Heart right ventricle (tissue), 16 donors: ENCODE measurements at regions of chr3 and their contacts with region 1.

Region 1: GRCh38 chr3:46089237-46090011 is 62.1 kb upstream of the XCR1 start:
- DNase-seq: peak; percentile 24 to 51
- ATAC-seq: peak; percentile 79 to 89 (median 86)
- H3K4me3 ChIP-seq: no peak overlapping the region
- H3K27ac ChIP-seq: peak overlapping the region in 4 of 10 donors; percentile 23 to 90 (median 58)
- H3K4me1 ChIP-seq: peaks cover 0 to 76% (median 0%) of the 10 kb centered on the region in 9 donors
- H3K27me3 ChIP-seq: no peaks in the 10 kb centered on the region
- CTCF ChIP-seq: no peak

Region 2: DNA sequence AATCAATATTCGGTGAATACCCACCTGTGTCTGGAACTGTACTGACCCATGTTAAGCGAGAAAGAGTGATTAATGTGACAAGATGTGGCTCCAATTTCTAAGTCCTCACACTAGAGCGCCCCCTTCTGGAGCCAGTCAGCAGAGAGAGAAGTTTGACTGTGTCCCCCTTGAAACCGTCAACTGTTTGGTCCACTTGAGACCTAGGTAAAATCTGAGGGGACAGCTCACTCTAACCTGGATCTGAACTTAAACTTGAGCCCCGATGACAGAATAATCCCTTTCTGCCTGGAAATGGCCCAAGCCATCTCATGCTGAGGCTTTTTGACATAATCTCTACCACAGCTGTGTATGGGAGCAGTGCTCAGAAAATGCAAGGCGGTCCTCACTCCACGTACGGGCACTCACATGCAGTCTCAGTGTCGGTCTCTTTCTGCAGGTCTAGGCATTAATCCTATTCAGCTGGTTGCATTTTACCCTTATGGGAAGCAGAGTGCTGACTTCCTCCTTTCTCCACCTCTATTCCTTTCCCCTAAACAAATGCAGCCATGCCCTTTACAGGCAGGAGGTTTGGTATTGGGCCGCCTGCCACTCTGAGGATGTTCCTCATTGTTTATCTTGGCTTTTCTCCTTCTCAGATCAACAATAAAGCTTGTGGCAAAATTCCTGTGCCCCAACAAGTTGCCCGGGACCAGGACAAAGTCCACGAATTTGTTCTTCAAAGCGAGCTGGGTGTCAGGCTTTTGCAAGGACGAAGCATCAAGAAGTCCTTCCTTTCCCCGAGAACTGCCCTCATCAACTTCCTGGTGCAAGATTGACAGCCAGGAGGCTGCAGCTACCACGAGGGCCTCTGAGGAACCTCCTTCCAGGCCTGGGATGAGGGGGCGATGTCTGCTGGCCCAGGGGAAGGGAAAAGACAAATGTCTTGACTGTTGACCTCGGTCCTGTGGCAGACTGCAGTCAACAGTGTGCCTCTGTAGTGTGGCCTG is 542.4 kb before region 1 on chr3:
- intact Hi-C with region 1: no loop called
- DNase-seq: no peak
- ATAC-seq: no peak
- H3K4me3 ChIP-seq: no peak overlapping the region
- H3K27ac ChIP-seq: peak overlapping the region in 8 of 10 donors; percentile 17 to 84 (median 56)
- H3K4me1 ChIP-seq: peaks cover 14 to 84% (median 68%) of the 10 kb centered on the region in 9 donors
- H3K27me3 ChIP-seq: no peaks in the 10 kb centered on the region
- CTCF ChIP-seq: peak in 7 of 9 donors; percentile 14 to 38 (median 30)

Region 3: GRCh38 chr3:45986303-45986982 is 103.0 kb before region 1 on chr3:
- intact Hi-C with region 1: no loop called
- DNase-seq: peak; percentile 43 to 71
- ATAC-seq: peak; percentile 68 to 87 (median 84)
- H3K4me3 ChIP-seq: no peak overlapping the region
- H3K27ac ChIP-seq: peak overlapping the region; percentile 79 to 99 (median 92)
- H3K4me1 ChIP-seq: peaks cover 39 to 99% (median 90%) of the 10 kb centered on the region in 9 donors
- H3K27me3 ChIP-seq: no peaks in the 10 kb centered on the region
- CTCF ChIP-seq: no peak

Region 4: DNA sequence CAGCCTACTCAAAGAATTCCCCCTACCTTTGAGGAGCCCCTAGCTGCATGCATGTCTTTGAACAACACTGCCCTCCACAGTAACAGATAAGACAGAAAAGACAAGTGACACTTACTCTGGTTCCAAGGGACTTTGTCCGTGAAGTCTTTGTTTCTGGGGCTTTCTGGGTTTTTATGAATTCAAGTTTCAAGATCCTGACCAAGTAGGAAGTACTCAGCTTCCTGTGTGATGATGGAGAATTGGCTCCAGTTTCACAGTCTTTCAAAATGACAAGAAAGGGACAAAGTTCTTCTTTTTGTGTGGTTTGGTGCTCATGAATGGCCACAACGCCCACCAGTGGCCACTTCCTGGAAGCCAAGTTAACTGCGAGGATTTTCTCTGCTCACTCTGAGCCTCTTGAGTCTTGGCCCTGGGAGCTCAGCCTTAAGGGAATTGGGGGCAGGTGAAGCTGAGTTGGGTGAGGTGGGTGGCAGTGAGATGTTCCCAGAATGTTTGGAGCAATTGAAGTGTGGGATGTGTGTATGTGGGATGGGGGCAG is 118.8 kb after region 1 on chr3 and contains the start of gene CCR1:
- intact Hi-C with region 1: loop called in 1 of 10 experiments (anchors 10 kb)
- DNase-seq: peak in 1 of 2 donors; percentile 36
- ATAC-seq: peak in 7 of 8 donors; percentile 29 to 77 (median 43)
- H3K4me3 ChIP-seq: peak within 1 kb of the TSS in 7 of 10 donors; percentile 18 to 60 (median 30)
- H3K27ac ChIP-seq: peak within 1 kb of the TSS in 5 of 10 donors; percentile 30 to 90 (median 46)
- H3K4me1 ChIP-seq: peaks cover 0 to 52% (median 0%) of the 10 kb centered on the region in 9 donors
- H3K27me3 ChIP-seq: peaks cover 0 to 6% (median 0%) of the 10 kb centered on the region in 7 donors
- CTCF ChIP-seq: peak in 5 of 9 donors; percentile 6 to 54 (median 34)
- total RNA-seq, gene CCR1: 0.66 to 24.9 (median 1.8) TPM

Region 5: GRCh38 chr3:46368569-46368968 is 279.1 kb after region 1 on chr3:
- intact Hi-C with region 1: loop called in 7 of 10 experiments (anchors 5 to 10 kb)
- DNase-seq: peak; percentile 44 to 46
- ATAC-seq: peak in 7 of 8 donors; percentile 64 to 85 (median 74)
- H3K4me3 ChIP-seq: no peak overlapping the region
- H3K27ac ChIP-seq: peak overlapping the region in 1 of 10 donors; percentile 86
- H3K4me1 ChIP-seq: peaks cover 0 to 50% (median 0%) of the 10 kb centered on the region in 9 donors
- H3K27me3 ChIP-seq: peaks cover 0 to 45% (median 7%) of the 10 kb centered on the region in 7 donors
- CTCF ChIP-seq: peak in 4 of 9 donors; percentile 21 to 64 (median 25)

Region 6: DNA sequence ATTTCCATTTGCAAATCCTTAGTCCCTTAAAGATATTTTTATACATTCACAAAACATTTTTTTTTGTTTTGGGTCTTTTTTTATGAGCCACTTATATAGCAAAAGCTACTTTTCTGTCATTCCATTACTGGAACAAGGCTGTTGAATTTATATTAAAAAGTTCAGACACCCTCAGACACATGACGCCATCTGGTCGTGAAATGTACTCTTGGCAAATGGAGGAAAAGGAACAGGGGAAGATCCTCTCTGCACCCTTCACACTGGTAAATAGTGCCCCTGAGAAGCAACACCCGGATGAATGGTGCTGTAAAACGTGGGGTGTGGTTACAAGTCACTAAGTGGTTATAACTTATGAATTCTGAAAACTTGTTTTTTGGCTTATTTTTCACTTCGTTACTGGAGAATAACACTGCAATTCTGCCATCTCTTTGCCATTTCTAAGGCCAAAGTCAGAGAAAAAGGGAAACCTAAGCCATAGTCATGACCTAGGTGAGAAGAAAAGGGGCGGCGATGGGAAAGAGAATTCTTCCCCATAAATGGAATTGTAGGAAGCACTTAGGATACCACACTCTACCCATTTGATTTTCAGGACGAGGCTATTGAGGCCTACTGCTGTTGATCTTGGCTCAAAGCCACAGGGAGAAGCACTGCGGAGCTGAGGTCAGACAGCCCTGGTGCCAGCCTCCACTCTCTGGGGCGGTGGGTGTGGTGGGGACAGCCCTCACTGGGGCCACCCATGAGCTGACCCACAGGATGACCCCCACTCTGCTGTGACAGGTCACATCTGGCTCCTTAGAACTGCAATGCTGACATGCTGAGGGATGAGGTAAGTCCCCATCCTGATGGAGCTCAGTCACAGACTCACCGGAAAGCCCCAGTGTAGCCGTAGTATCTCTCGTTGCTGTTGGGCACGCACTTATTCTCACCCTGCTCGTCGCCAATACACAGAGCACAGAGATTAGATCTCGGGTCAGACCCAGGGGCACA is 353.4 kb after region 1 on chr3:
- intact Hi-C with region 1: loop called in 1 of 10 experiments (anchors 5 kb)
- DNase-seq: peak in 1 of 2 donors; percentile 24
- ATAC-seq: peak in 3 of 8 donors; percentile 31 to 47 (median 38)
- H3K4me3 ChIP-seq: no peak overlapping the region
- H3K27ac ChIP-seq: no peak overlapping the region
- H3K4me1 ChIP-seq: peaks cover 0 to 7% (median 0%) of the 10 kb centered on the region in 9 donors
- H3K27me3 ChIP-seq: no peaks in the 10 kb centered on the region
- CTCF ChIP-seq: peak in 4 of 9 donors; percentile 45 to 65 (median 58)